Activated B cell treated with CpG ODN at 0.5 μM for 24 hours (primary cell): ENCODE measurements at regions of chr7 and their contacts with region 1.

Region 1: GRCh38 chr7:64902806-64903721 is at the start of gene ZNF273:
- DNase-seq: peak; percentile 72
- ATAC-seq: peak; percentile 100
- H3K4me3 Mint-ChIP-seq: peak within 1 kb of the TSS; percentile 97
- H3K27ac Mint-ChIP-seq: peak within 1 kb of the TSS; percentile 91
- H3K4me1 Mint-ChIP-seq: peaks cover 52% of the 10 kb centered on the region
- H3K27me3 Mint-ChIP-seq: no peaks in the 10 kb centered on the region
- CTCF ChIP-seq: no peak
- total RNA-seq, gene ZNF273: 10.6 and 12.3 TPM in 2 replicates

Region 2: GRCh38 chr7:64562626-64563275 is 340.3 kb before region 1 on chr7 and contains the start of gene ZNF680:
- CTCF ChIA-PET with region 1: no interaction called
- POLR2A ChIA-PET with region 1: interaction called, 18 read pairs
- intact Hi-C with region 1: loop called (anchors 1 kb)
- DNase-seq: peak; percentile 75
- ATAC-seq: peak; percentile 100
- H3K4me3 Mint-ChIP-seq: peak within 1 kb of the TSS; percentile 99
- H3K27ac Mint-ChIP-seq: peak within 1 kb of the TSS; percentile 93
- H3K4me1 Mint-ChIP-seq: peaks cover 28% of the 10 kb centered on the region
- H3K27me3 Mint-ChIP-seq: no peaks in the 10 kb centered on the region
- CTCF ChIP-seq: no peak
- total RNA-seq, gene ZNF680: 17.1 and 22.0 TPM in 2 replicates

Region 3: GRCh38 chr7:64794171-64794844 is 108.8 kb before region 1 on chr7 and contains the start of gene ZNF138:
- CTCF ChIA-PET with region 1: no interaction called
- POLR2A ChIA-PET with region 1: interaction called, 18 read pairs
- intact Hi-C with region 1: loop called (anchors 1 kb)
- DNase-seq: peak; percentile 83
- ATAC-seq: peak; percentile 99
- H3K4me3 Mint-ChIP-seq: peak within 1 kb of the TSS; percentile 99
- H3K27ac Mint-ChIP-seq: peak within 1 kb of the TSS; percentile 98
- H3K4me1 Mint-ChIP-seq: peaks cover 27% of the 10 kb centered on the region
- H3K27me3 Mint-ChIP-seq: no peaks in the 10 kb centered on the region
- CTCF ChIP-seq: no peak
- total RNA-seq, gene ZNF138: 14.2 and 17.8 TPM in 2 replicates

Region 4: GRCh38 chr7:65006094-65006992 is 103.3 kb after region 1 on chr7 and contains the start of gene ERV3-1:
- CTCF ChIA-PET with region 1: no interaction called
- POLR2A ChIA-PET with region 1: interaction called, 19 read pairs
- intact Hi-C with region 1: loop called (anchors 2 kb)
- DNase-seq: peak; percentile 77
- ATAC-seq: peak; percentile 99
- H3K4me3 Mint-ChIP-seq: peak within 1 kb of the TSS; percentile 98
- H3K27ac Mint-ChIP-seq: peak within 1 kb of the TSS; percentile 95
- H3K4me1 Mint-ChIP-seq: peaks cover 46% of the 10 kb centered on the region
- H3K27me3 Mint-ChIP-seq: no peaks in the 10 kb centered on the region
- CTCF ChIP-seq: no peak
- total RNA-seq, gene ERV3-1: 23.2 and 24.8 TPM in 2 replicates

Region 5: GRCh38 chr7:65307651-65308299 is 404.7 kb after region 1 on chr7:
- CTCF ChIA-PET with region 1: no interaction called
- POLR2A ChIA-PET with region 1: no interaction called
- intact Hi-C with region 1: loop called (anchors 2 kb)
- DNase-seq: peak; percentile 22
- ATAC-seq: peak; percentile 79
- H3K4me3 Mint-ChIP-seq: no peak overlapping the region
- H3K27ac Mint-ChIP-seq: no peak overlapping the region
- H3K4me1 Mint-ChIP-seq: peaks cover 5% of the 10 kb centered on the region
- H3K27me3 Mint-ChIP-seq: peaks cover 2% of the 10 kb centered on the region
- CTCF ChIP-seq: no peak